Heart right ventricle (tissue), 16 donors: ENCODE measurements at regions of chr5 and their contacts with region 1.

Region 1: GRCh38 chr5:173963867-173964441 is 25.0 kb upstream of the C5orf47 start:
- DNase-seq: no peak
- ATAC-seq: peak in 5 of 8 donors; percentile 16 to 41 (median 32)
- H3K4me3 ChIP-seq: no peak overlapping the region
- H3K27ac ChIP-seq: peak overlapping the region in 8 of 10 donors; percentile 23 to 69 (median 46)
- H3K4me1 ChIP-seq: peaks cover 0 to 31% (median 13%) of the 10 kb centered on the region in 9 donors
- H3K27me3 ChIP-seq: no peaks in the 10 kb centered on the region
- CTCF ChIP-seq: no peak

Region 2: DNA sequence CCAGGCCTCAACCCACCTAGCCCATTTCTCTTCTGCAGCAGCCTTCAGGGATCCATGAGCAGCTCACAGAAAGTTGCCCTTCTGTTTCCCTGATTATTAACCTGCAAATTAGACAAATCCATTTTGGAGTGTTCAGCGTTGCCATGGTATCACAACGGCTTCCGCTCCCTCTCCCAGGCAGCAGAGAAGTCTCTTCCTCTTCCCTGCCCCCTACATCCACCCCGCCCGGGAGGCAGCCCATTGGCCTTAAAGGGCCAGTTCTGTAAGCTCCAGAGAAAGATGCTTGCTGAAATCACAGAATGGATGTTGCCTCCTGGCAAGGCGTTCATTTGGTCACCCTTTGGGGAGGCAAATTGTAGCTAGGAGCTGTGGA is 299.8 kb before region 1 on chr5:
- intact Hi-C with region 1: no loop called
- DNase-seq: peak; percentile 36 to 44
- ATAC-seq: peak in 4 of 8 donors; percentile 49 to 75 (median 67)
- H3K4me3 ChIP-seq: no peak overlapping the region
- H3K27ac ChIP-seq: no peak overlapping the region
- H3K4me1 ChIP-seq: peaks cover 0 to 9% (median 0%) of the 10 kb centered on the region in 9 donors
- H3K27me3 ChIP-seq: no peaks in the 10 kb centered on the region
- CTCF ChIP-seq: no peak

Region 3: GRCh38 chr5:173925448-173926071 is 38.4 kb before region 1 on chr5:
- intact Hi-C with region 1: loop called in 1 of 10 experiments (anchors 5 kb)
- DNase-seq: peak; percentile 30 to 41
- ATAC-seq: peak in 1 of 8 donors; percentile 46
- H3K4me3 ChIP-seq: no peak overlapping the region
- H3K27ac ChIP-seq: peak overlapping the region in 9 of 10 donors; percentile 45 to 91 (median 85)
- H3K4me1 ChIP-seq: peaks cover 9 to 100% (median 82%) of the 10 kb centered on the region in 9 donors
- H3K27me3 ChIP-seq: no peaks in the 10 kb centered on the region
- CTCF ChIP-seq: peak in 7 of 9 donors; percentile 37 to 70 (median 58)

Region 4: GRCh38 chr5:174188295-174188694 is 224.3 kb after region 1 on chr5:
- intact Hi-C with region 1: no loop called
- DNase-seq: no peak
- ATAC-seq: peak in 3 of 8 donors; percentile 48 to 76 (median 61)
- H3K4me3 ChIP-seq: no peak overlapping the region
- H3K27ac ChIP-seq: no peak overlapping the region
- H3K4me1 ChIP-seq: no peaks in the 10 kb centered on the region
- H3K27me3 ChIP-seq: peaks cover 0 to 26% (median 7%) of the 10 kb centered on the region in 7 donors
- CTCF ChIP-seq: no peak